Posterior cingulate gyrus (tissue), 11 donors: ENCODE measurements at regions of chr2 and their contacts with region 1.

Region 1: DNA sequence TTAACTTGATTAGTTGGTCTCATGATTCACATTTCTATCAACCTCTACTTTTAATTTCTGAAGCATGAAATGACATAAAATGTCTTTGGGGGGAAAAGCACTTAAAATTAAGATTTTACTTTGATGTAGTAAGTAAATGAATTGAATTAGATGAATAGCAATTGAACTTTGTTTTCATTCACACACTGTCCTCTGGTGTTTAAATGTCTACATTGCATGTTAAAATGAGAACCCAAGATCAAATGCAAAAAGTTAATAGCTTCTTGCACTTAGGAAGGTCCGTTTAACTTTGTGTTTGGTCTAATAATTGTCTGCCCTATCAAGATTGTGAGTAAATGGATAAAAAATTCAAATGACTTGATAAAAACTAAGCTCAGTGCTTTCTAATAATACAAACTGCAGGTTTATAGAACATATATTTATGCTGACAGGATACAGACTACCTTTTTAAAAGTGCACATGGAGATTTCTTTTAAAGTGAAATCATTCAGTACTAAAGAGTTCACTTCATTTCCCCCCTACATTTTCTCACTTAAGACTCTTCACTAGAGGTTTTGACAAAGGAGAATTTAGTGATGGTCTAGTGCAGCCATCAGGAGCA is 156.2 kb upstream of the NABP1 start:
- DNase-seq: no peak

Region 2: DNA sequence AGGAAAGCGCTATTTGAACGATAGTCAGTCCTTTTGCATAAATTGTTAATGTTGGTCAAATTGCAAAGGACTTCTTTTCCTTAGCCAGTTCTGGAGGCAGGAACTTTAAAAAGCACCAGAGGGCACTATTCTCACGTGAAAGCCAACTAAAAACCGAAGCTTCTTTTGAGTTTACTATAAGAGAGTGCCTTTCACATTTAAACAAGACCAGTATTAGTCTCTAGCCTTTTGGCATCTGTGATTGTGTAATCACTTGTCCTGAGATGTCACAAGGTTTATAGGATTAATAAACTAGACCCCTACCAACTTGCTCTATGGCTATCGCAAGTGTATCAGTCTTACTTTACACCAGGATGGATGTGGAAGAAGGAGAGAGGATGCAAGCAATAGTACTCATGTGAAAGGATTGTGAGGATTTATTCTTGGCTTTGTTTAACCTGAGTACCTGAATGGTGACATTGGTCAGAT is 356.5 kb before region 1 on chr2:
- intact Hi-C with region 1: loop called (anchors 1 kb)
- DNase-seq: no peak

Region 3: GRCh38 chr2:191677646-191678436 is 156.1 kb after region 1 on chr2 and contains the start of gene NABP1:
- intact Hi-C with region 1: no loop called
- DNase-seq: peak; percentile 93 to 100 (median 98)